Right lobe of liver (tissue), 6 donors: ENCODE measurements at regions of chr1 and their contacts with region 1.

Region 1: GRCh38 chr1:3012456-3013291 is 8.6 kb upstream of the ACTRT2 start:
- DNase-seq: peak in 2 of 3 donors; percentile 46 to 57
- ATAC-seq: peak; percentile 65 to 78 (median 74)
- H3K4me3 ChIP-seq: no peak overlapping the region
- H3K27ac ChIP-seq: no peak overlapping the region
- H3K4me1 ChIP-seq: no peaks in the 10 kb centered on the region
- H3K27me3 ChIP-seq: peaks cover 0 to 6% of the 10 kb centered on the region in 2 donors
- CTCF ChIP-seq: peak; percentile 41 to 80 (median 64)
- POLR2A ChIP-seq: no peak

Region 2: DNA sequence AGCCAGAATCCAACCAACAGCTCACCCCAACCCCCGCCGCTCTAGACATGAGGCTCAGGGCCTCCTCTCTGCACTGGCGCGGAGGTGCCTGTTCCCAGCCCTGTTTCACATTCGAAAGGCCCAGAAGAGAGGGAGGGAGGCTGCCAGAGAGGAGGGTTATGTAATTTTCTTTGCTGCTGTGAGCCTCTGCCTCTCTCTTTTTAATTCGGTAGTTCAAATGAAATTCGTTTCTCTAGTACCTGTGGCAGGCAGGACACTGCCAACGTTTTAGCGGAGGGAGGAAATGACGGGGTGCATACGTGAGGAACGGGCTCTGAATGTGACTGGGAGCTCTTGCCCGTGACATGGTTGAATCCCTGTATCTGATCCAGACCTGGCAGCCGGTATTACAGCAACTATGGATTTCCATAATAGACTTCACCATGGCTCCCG is 65.8 kb after region 1 on chr1:
- intact Hi-C with region 1: no loop called
- DNase-seq: no peak
- ATAC-seq: no peak
- H3K4me3 ChIP-seq: no peak overlapping the region
- H3K27ac ChIP-seq: no peak overlapping the region
- H3K4me1 ChIP-seq: no peaks in the 10 kb centered on the region
- H3K27me3 ChIP-seq: peaks cover 0 to 5% of the 10 kb centered on the region in 2 donors
- CTCF ChIP-seq: no peak
- POLR2A ChIP-seq: no peak

Region 3: DNA sequence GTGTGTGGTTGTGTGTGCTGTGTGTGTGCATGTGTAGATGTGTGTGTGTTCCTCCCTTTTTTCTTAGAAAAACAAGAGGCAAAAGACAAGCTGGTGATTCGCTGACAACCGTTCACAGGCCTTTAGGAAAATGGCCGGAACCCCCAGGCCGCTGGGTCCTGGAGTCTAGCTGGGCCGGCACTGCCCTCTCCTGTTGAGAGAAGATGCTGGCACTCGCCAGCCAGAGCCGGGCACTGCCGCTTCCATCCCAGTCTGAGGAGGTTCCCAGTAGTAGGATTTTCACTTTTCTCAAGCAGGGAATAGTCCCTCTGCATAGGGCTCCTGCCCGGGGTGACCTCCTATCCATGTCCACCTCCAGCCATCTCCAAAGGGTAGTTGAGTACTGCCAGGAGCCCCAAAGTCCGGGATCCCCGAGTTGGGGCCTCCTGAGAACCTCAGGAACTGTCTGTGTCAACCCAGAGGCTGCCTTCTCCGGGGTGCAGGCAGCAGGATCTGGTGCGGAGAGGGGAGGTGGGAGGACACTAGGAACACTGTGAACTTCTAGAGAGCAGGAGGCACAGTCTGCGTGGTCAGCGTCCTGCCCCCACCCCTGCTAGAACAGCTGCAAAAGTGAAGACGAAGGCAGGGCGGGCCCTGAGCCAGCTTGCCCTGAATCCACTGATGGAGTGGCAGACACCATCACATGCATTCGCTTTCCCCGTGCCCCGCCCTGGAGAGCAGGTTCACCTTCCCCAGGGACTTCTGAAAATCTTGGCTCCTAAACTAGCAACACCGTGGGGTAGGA is 397.7 kb after region 1 on chr1:
- intact Hi-C with region 1: loop called in 1 of 2 experiments (anchors 5 kb)
- DNase-seq: peak in 1 of 3 donors; percentile 44
- ATAC-seq: peak; percentile 28 to 71 (median 49)
- H3K4me3 ChIP-seq: no peak overlapping the region
- H3K27ac ChIP-seq: no peak overlapping the region
- H3K4me1 ChIP-seq: no peaks in the 10 kb centered on the region
- H3K27me3 ChIP-seq: no peaks in the 10 kb centered on the region
- CTCF ChIP-seq: peak; percentile 27 to 46 (median 40)
- POLR2A ChIP-seq: no peak

Region 4: DNA sequence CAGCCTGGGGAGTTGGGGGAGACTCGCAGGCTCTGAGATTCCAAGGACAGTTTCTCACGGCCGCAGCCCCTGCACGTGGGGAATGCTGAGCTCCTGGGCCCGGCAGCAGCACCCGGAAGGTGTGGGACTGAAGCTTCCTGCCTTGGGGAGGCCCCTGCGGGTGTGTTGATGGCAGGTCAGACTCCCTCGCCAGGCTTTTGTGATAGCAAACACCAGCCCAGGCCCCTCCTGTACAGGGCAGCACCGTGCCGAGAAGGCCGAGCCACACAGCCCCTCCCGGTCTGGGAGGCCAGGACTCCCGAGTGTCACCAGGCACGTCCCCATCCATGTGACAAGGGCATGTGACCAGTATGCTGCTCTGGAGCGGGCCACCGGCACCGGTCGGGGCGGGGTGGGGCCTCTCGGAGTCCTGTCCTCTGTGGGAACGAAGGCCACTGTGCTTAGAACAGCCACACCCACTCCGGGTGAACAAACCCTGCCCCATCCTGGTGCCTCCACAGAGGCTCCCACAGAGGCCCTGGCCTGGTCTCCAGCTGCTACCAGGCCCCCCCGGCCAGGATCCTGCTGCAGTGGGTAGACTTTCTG is 410.7 kb after region 1 on chr1:
- intact Hi-C with region 1: loop called (anchors 5 kb)
- DNase-seq: peak in 1 of 3 donors; percentile 58
- ATAC-seq: peak; percentile 27 to 77 (median 48)
- H3K4me3 ChIP-seq: no peak overlapping the region
- H3K27ac ChIP-seq: no peak overlapping the region
- H3K4me1 ChIP-seq: no peaks in the 10 kb centered on the region
- H3K27me3 ChIP-seq: no peaks in the 10 kb centered on the region
- CTCF ChIP-seq: no peak
- POLR2A ChIP-seq: no peak